Prostate gland (tissue), 2 donors: ENCODE measurements at regions of chr3 and their contacts with region 1.

Region 1: DNA sequence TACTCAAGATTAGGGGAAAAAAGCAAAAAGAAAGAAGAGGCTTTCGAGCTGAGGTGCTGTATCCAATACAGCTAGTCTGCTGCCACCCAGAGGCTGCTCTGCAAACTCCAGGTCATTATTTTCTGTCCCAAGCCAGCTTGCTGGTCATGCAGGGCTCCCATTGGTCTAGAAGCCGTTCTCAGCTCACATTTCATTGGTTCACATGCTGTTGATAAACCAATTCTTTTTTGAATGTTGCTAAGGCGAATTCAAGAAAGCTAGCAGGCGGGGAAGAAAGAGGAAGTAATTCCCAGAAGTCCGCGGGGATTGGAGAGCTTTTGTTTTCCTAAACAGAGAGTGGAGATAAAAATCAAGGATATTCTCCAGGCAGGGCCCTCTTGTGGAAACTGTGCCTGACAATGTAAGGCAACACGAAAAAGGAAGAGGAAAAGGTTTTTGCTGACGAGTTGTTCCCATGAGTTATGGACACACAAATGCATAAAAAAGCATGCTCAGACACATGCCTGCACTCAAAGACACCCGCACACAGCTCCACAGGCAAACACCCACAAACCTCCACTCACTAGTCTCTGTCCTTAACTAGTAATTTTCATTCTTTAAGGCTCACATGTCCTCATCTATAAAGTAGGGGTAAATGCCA is 33.4 kb downstream of the FSTL1 start:
- DNase-seq: peak; percentile 94
- H3K4me3 ChIP-seq: peak overlapping the region in 1 of 2 donors; percentile 5
- H3K27ac ChIP-seq: peak overlapping the region; percentile 71 to 72
- H3K4me1 ChIP-seq: peaks cover 35% of the 10 kb centered on the region
- H3K27me3 ChIP-seq: no peaks in the 10 kb centered on the region
- CTCF ChIP-seq: peak; percentile 76 to 97 (median 90)
- POLR2A ChIP-seq: peak; percentile 24

Region 2: DNA sequence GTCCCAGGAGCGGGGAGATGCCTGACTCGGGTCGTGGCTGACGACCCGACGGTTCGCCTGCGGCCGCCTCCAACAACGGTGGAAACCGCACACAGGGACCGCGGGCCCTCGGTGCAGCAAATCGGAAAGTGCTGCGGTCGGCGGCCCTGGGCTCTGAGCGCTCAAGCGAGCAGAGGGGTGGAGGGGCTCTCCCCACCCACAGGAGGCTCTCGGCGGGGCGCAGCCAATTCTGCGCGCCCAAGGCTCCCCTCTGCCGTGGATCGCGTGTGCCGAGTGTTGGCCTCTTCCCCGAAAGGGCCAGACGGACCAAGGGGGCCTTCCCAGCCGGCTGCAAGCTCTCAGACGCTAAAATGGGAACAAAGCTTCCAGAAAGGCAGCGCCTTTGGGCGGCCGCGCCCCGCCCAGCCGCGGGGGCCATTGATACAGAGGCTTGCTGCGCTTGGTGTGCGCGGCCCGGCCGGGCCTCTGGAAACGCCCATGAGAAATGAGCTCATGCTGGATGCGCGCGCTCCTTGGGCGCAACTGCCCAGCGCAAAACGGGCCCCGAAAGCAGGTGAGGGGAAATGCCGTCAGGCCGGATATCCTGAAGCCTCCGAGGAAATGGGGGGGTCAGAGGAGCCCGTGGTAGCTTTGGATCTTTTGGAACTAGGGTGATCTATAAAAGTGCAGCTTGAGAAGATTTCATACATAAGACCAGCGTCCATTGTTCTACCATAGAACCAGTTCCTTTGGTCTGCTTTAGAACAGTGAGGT is 322.0 kb before region 1 on chr3:
- intact Hi-C with region 1: loop called (anchors 5 kb)
- DNase-seq: peak; percentile 89
- H3K4me3 ChIP-seq: peak overlapping the region; percentile 88 to 91
- H3K27ac ChIP-seq: peak overlapping the region; percentile 100
- H3K4me1 ChIP-seq: peaks cover 6% of the 10 kb centered on the region
- H3K27me3 ChIP-seq: no peaks in the 10 kb centered on the region
- CTCF ChIP-seq: no peak
- POLR2A ChIP-seq: peak; percentile 87

Region 3: DNA sequence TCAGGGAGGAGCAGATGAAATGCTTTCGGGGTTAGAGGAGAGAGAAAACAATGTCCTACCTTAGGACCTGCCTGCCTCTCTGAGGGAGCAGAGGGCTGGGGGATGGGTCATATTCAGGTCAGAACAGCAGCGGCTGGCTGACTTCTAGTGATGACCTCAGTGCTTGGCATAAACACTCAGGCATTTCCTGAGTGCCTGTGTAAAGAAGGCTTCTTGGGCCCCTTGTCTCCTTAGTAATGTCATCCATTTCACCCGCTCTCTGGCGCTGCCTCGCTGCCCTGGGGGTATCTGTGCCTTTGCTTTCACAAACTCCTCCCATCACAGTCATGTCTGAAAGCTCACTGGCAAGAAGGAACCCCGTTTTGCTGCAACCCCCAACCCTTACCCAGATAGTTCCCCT is 240.2 kb before region 1 on chr3:
- intact Hi-C with region 1: no loop called
- DNase-seq: peak; percentile 56
- H3K4me3 ChIP-seq: no peak overlapping the region
- H3K27ac ChIP-seq: no peak overlapping the region
- H3K4me1 ChIP-seq: no peaks in the 10 kb centered on the region
- H3K27me3 ChIP-seq: no peaks in the 10 kb centered on the region
- CTCF ChIP-seq: peak in 1 of 4 experiments; percentile 14
- POLR2A ChIP-seq: no peak

Region 4: DNA sequence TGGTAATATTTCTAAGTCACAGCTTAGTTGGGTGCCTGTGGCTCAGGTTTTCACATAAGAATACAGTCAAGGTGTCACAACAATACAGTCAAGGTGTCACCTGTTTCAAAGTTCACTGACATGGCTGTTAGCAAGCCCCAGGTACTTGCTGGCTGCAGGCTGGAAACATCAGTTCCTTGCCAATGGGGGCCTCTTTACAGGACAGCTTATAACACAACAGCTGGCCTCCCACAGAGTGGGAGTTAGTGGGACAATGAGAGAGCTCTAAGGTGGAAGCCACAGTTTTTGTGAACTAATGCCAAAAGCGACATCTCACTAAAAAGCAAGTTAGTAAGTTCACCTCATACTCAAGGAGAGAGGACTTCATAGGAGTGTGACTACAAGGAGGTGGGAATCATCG is 177.7 kb before region 1 on chr3:
- intact Hi-C with region 1: loop called (anchors 5 kb)
- DNase-seq: no peak
- H3K4me3 ChIP-seq: no peak overlapping the region
- H3K27ac ChIP-seq: no peak overlapping the region
- H3K4me1 ChIP-seq: no peaks in the 10 kb centered on the region
- H3K27me3 ChIP-seq: no peaks in the 10 kb centered on the region
- CTCF ChIP-seq: no peak
- POLR2A ChIP-seq: no peak

Region 5: DNA sequence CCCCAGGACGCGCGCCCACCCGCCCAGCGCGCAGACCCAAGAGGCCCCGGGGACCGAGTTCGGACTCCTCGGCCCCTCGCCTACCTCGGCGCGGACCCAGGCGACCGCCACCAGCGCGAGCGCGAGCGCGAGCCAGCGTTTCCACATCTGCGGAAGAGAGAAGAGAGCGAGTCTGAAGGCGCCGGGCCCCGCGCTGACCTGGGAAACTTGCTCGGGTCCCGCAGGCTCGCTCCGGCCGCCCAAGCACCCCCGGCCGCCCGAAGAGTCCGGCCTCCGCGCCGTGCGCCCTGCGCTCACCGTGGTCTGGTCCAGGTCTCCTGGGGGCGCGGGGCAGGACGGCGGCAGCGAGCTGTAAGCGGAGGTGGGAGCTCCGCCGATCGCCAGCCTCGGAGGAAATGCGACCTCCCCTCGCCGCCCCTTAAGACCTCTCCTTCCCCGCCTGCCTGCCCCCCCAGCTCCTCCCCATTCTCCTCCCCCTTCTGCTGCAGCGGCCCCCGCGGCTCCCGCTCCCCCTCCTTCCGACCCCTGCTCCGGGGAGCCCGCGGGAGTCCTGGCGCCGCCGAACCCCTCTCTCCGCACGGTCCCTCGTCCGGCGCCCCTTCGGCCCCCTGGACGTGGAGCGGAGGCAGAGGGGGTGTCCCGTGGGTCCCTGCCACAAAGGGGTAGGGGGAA is 33.3 kb after region 1 on chr3 and contains the start of gene FSTL1:
- intact Hi-C with region 1: loop called (anchors 2 kb)
- DNase-seq: peak; percentile 64
- H3K4me3 ChIP-seq: peak within 1 kb of the TSS; percentile 80 to 96
- H3K27ac ChIP-seq: peak within 1 kb of the TSS; percentile 95 to 98
- H3K4me1 ChIP-seq: peaks cover 16% of the 10 kb centered on the region
- H3K27me3 ChIP-seq: no peaks in the 10 kb centered on the region
- CTCF ChIP-seq: no peak
- POLR2A ChIP-seq: peak; percentile 57
- total RNA-seq, gene FSTL1: 212 to 265 TPM

Region 6: GRCh38 chr3:120506828-120507774 is 89.7 kb after region 1 on chr3:
- intact Hi-C with region 1: loop called (anchors 5 kb)
- DNase-seq: peak; percentile 9
- H3K4me3 ChIP-seq: no peak overlapping the region
- H3K27ac ChIP-seq: no peak overlapping the region
- H3K4me1 ChIP-seq: peaks cover 6% of the 10 kb centered on the region
- H3K27me3 ChIP-seq: no peaks in the 10 kb centered on the region
- CTCF ChIP-seq: peak; percentile 19 to 53 (median 46)
- POLR2A ChIP-seq: no peak